PC-3 (cell line): ENCODE measurements at regions of chr20 and their contacts with region 1.

Region 1: DNA sequence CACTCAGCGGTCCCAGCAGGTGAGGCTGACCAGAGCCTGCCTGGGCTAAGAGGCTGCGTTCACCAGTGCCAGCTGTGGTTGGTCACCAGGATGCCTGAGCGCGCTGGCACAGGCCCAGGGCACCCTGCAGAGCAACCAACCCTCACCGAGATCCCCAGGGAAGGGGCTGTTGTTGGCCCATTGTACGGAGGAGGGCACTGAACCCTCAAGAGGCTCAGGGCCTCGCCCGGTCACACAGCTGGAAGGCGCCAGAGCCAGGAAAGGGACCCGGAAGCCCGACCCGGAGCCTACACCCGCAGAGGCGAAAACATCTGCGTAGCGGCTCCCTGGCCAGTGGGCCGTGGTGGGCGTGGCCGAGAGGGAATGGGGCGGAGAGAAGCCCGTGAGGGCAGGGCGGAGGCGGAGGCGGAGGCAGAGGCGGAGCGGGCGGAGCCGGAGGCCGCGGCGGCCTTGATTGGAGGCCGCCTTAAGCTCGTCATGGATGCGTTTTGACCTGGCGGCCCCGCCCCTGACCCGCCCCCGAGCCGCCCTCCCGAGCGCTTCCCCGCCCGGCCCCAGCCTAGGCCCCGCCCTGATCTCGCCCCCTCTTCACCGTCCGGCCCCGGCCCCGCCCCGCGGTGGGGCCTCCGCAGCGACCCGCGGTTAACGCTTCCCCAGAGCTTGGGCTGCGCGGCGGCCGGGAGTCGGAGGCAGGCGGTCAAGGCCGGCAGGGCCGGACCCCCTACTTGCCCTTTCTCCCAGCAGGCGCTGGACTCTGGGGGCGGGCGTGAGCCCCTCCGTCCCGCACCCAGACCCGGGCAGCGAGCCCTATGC is 2.2 kb upstream of the MRGBP start:
- DNase-seq: peak; percentile 97
- ATAC-seq: peak; percentile 76
- H3K4me3 ChIP-seq: peak overlapping the region; percentile 72
- H3K27ac ChIP-seq: peak overlapping the region; percentile 61
- H3K4me1 ChIP-seq: peaks cover 39% of the 10 kb centered on the region
- H3K27me3 ChIP-seq: no peaks in the 10 kb centered on the region
- CTCF ChIP-seq: no peak

Region 2: DNA sequence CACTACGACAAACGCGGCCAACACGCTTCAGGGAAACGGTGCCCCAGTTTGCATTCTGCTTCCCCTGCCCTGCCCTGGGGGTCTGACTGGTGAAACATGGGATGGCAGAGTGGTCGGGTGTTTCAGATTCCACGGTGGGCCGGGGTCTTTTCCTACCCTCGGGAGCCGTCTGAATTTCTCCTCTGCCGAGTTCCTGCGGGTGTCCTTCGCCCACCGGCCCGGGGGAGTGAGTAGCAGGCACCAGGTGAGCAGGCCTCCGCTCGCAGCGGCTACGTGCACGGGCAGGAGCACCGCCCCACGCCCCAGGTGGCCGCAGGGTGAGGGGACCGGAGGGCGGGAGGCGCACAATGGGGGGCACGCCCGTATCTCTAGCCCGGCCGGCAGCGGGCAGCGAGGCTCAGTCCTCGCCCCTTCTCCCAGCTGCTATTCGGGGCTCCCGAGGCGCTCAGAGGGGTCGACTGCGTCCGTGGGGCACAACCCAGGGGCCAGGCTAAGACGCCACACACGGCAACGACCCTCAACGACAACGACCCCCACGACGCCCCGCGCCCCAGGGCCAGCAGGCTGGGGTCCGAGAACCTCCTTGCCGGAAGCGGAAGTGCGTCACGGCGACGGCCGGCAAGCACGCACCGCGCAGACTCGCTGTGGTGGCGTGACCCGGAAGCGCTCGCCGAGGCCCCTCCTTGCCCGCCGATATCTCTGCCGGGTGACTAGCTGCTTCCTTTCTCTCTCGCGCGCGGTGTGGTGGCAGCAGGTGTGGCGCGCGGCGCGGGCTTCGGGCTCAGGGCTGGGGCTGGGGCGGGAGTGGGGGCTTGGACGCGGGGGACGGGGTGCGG is 407.5 kb before region 1 on chr20 and contains the start of gene RPS21:
- CTCF ChIA-PET with region 1: no interaction called
- POLR2A ChIA-PET with region 1: no interaction called
- intact Hi-C with region 1: loop called (anchors 10 kb)
- DNase-seq: peak; percentile 91
- ATAC-seq: peak; percentile 82
- H3K4me3 ChIP-seq: peak within 1 kb of the TSS; percentile 100
- H3K27ac ChIP-seq: peak within 1 kb of the TSS; percentile 75
- H3K4me1 ChIP-seq: peaks cover 18% of the 10 kb centered on the region
- H3K27me3 ChIP-seq: no peaks in the 10 kb centered on the region
- CTCF ChIP-seq: no peak
- total RNA-seq, gene RPS21: 1,250 and 1,945 TPM in 2 replicates

Region 3: GRCh38 chr20:62623488-62624324 is 170.4 kb before region 1 on chr20:
- CTCF ChIA-PET with region 1: interaction called, 3 read pairs
- POLR2A ChIA-PET with region 1: interaction called, 6 read pairs
- intact Hi-C with region 1: loop called (anchors 10 kb)
- DNase-seq: peak; percentile 98
- ATAC-seq: peak; percentile 63
- H3K4me3 ChIP-seq: peak overlapping the region; percentile 45; the same call in 1 of the 2 replicates
- H3K27ac ChIP-seq: peak overlapping the region; percentile 98
- H3K4me1 ChIP-seq: peaks cover 60% of the 10 kb centered on the region
- H3K27me3 ChIP-seq: no peaks in the 10 kb centered on the region
- CTCF ChIP-seq: no peak

Region 4: GRCh38 chr20:62668441-62669027 is 125.6 kb before region 1 on chr20:
- CTCF ChIA-PET with region 1: interaction called, 4 read pairs
- POLR2A ChIA-PET with region 1: no interaction called
- intact Hi-C with region 1: loop called (anchors 1 kb)
- DNase-seq: peak; percentile 78
- ATAC-seq: peak; percentile 12
- H3K4me3 ChIP-seq: no peak overlapping the region
- H3K27ac ChIP-seq: no peak overlapping the region
- H3K4me1 ChIP-seq: peaks cover 13% of the 10 kb centered on the region; the same call in 1 of the 2 replicates
- H3K27me3 ChIP-seq: no peaks in the 10 kb centered on the region
- CTCF ChIP-seq: peak; percentile 85

Region 5: DNA sequence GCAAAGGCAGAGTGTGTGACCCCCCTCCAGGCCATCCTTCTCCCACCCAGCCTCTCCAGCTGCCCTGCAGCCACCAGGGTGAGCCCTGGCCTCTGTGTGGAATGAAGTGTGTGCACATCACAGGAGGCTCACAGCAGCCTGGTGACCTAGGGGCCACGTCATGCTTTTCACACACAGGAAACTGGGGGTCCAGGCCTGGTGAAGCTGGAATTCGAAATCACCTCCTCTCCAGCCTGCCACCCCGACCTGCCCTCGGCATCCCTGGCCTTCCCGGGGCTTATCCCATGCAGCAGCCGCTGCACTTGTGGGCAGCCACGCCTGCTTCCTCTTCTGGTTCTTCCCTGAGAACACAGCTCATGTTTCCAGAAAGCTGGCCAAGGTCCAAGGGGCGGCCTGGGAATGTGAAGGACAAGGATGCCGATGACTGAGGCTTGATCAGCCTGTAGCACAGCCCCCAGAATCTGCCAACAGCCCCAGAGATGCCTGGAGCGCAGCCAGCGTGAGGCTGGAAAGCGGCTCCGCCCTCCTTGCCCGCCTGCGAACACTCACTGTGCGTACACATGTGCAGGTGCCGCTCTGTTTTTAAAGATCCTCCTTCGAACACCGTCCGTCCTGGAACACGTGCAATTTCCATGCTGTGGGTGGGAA is 89.7 kb before region 1 on chr20:
- CTCF ChIA-PET with region 1: interaction called, 13 read pairs
- POLR2A ChIA-PET with region 1: interaction called, 10 read pairs
- intact Hi-C with region 1: loop called (anchors 1 kb)
- DNase-seq: peak; percentile 99
- ATAC-seq: peak; percentile 55
- H3K4me3 ChIP-seq: 0 out of 2 replicates have a peak overlapping the region, but pooled peaks have one; percentile 3
- H3K27ac ChIP-seq: peak overlapping the region; percentile 97
- H3K4me1 ChIP-seq: peaks cover 40% of the 10 kb centered on the region
- H3K27me3 ChIP-seq: no peaks in the 10 kb centered on the region
- CTCF ChIP-seq: 0 out of 2 replicates have a peak, but pooled peaks have one; percentile 23

Region 6: GRCh38 chr20:62809530-62810428 is 15.7 kb after region 1 on chr20:
- CTCF ChIA-PET with region 1: no interaction called
- POLR2A ChIA-PET with region 1: interaction called, 18 read pairs
- intact Hi-C with region 1: no loop called
- DNase-seq: no peak
- ATAC-seq: no peak
- H3K4me3 ChIP-seq: no peak overlapping the region
- H3K27ac ChIP-seq: no peak overlapping the region
- H3K4me1 ChIP-seq: peaks cover 16% of the 10 kb centered on the region
- H3K27me3 ChIP-seq: no peaks in the 10 kb centered on the region
- CTCF ChIP-seq: no peak

Region 7: GRCh38 chr20:63381807-63382322 is 587.7 kb after region 1 on chr20:
- CTCF ChIA-PET with region 1: no interaction called
- POLR2A ChIA-PET with region 1: no interaction called
- intact Hi-C with region 1: no loop called
- DNase-seq: peak; percentile 25
- ATAC-seq: peak; percentile 45; the same call in 1 of the 2 replicates
- H3K4me3 ChIP-seq: no peak overlapping the region
- H3K27ac ChIP-seq: no peak overlapping the region
- H3K4me1 ChIP-seq: no peaks in the 10 kb centered on the region
- H3K27me3 ChIP-seq: peaks cover 38% of the 10 kb centered on the region
- CTCF ChIP-seq: peak; percentile 99

Region 8: DNA sequence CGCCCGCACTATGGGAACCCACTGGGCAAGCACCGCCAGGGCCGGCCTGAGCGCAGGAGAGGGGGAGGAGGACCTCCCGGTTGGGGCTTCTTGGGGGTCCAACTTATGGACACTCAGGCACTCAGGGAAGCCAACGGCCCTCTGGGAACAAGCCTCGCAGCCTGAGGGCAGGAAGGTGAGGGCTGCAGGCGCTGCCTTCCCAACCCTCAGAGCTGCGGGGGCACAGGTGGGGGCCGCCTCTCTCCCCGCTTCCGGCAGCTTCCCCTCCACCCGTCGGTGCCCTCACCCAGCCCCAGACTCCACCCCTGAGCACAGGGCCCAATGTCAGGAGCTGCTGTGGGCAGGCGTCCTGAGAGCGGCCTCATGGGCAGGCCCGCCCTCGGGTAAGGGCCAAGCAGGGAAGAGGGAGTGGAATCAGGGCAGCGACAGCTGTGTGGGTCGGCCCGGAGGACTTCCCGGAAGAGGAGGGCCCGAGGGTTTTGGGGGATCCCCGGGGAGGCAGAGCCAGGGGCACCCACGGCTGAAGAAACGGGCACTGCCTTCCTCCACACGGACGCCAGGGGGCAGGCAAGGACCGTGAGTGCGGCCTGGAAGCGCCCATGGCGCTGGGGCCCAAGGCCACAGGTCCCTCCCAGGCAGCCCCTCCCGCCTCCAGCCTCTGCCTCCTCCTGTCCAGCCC is 743.5 kb after region 1 on chr20:
- CTCF ChIA-PET with region 1: no interaction called
- POLR2A ChIA-PET with region 1: no interaction called
- intact Hi-C with region 1: no loop called
- DNase-seq: peak; percentile 98
- ATAC-seq: peak; percentile 85
- H3K4me3 ChIP-seq: peak overlapping the region; percentile 84
- H3K27ac ChIP-seq: peak overlapping the region; percentile 85
- H3K4me1 ChIP-seq: peaks cover 33% of the 10 kb centered on the region
- H3K27me3 ChIP-seq: no peaks in the 10 kb centered on the region
- CTCF ChIP-seq: peak; percentile 84